Adrenal gland (tissue), 19 donors: ENCODE measurements at regions of chr1 and their contacts with region 1.

Region 1: GRCh38 chr1:55375617-55376258 is 160.6 kb upstream of the USP24 start:
- DNase-seq: peak in 6 of 7 donors; percentile 23 to 63 (median 46)
- H3K4me3 ChIP-seq: no peak overlapping the region
- H3K27ac ChIP-seq: peak overlapping the region in 1 of 5 donors; percentile 9
- H3K4me1 ChIP-seq: no peaks in the 10 kb centered on the region
- H3K27me3 ChIP-seq: no peaks in the 10 kb centered on the region
- CTCF ChIP-seq: peak; percentile 64 to 95 (median 84)
- POLR2A ChIP-seq: no peak

Region 2: DNA sequence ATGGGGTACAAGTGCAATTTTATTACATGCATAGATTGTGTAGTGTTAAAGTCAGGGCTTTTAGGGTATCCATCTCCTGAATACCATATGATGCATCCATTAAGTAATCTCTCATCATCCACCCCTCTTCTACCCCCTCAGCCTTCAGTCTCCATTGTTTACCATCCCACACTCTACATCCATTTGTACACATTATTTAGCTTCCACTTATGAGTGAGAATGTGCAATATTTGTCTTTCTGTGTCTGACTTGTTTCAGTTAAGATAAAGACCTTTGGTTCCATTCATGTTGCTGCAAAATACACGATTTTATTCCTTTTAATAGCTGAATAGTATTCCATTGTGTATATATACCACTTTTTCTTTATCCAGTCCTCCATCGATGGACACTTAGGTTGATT is 62.0 kb after region 1 on chr1:
- intact Hi-C with region 1: no loop called
- DNase-seq: no peak
- H3K4me3 ChIP-seq: no peak overlapping the region
- H3K27ac ChIP-seq: no peak overlapping the region
- H3K4me1 ChIP-seq: no peaks in the 10 kb centered on the region
- H3K27me3 ChIP-seq: no peaks in the 10 kb centered on the region
- CTCF ChIP-seq: no peak
- POLR2A ChIP-seq: no peak

Region 3: DNA sequence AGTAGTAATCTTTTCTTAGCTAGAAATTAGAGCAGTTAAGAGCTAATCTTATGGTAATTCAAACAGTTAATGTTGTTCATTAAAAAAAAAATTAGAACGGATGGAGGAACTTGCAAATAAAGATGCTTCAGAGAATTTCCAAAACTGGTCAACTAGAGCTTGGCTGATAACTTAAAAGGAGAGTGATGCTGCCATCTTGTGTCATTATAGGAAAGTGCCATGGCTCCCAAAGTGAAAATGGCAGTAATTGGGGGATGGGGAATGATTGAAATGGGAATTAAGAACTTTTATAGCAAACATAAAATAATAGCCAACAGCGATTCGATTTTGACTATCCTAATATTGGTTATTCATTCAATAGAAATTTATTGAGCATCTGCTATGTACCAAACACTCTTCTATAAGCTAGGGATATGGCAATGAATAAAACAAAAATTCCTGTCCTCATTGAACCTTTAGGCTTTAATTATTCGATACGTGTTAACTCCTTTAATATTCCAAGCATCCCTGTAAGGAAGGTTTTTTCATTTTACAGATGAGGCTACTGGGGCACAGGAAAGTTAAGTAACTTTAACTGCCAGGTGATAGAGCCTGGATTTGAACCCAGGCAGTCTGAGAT is 1209.3 kb after region 1 on chr1:
- intact Hi-C with region 1: loop called (anchors 5 kb)
- DNase-seq: peak in 4 of 7 donors; percentile 25 to 66 (median 54)
- H3K4me3 ChIP-seq: no peak overlapping the region
- H3K27ac ChIP-seq: no peak overlapping the region
- H3K4me1 ChIP-seq: peaks cover 0 to 13% of the 10 kb centered on the region in 2 donors
- H3K27me3 ChIP-seq: no peaks in the 10 kb centered on the region
- CTCF ChIP-seq: peak; percentile 56 to 96 (median 88)
- POLR2A ChIP-seq: no peak

Region 4: GRCh38 chr1:56709269-56709880 is 1333.6 kb after region 1 on chr1:
- intact Hi-C with region 1: loop called in 1 of 2 experiments (anchors 10 kb)
- DNase-seq: peak in 3 of 7 donors; percentile 4 to 21 (median 9)
- H3K4me3 ChIP-seq: no peak overlapping the region
- H3K27ac ChIP-seq: no peak overlapping the region
- H3K4me1 ChIP-seq: no peaks in the 10 kb centered on the region
- H3K27me3 ChIP-seq: no peaks in the 10 kb centered on the region
- CTCF ChIP-seq: peak; percentile 53 to 75 (median 61)
- POLR2A ChIP-seq: no peak